Naive thymus-derived CD4-positive, alpha-beta T cell (primary cell): ENCODE measurements at regions of chr10 and their contacts with region 1.

Region 1: DNA sequence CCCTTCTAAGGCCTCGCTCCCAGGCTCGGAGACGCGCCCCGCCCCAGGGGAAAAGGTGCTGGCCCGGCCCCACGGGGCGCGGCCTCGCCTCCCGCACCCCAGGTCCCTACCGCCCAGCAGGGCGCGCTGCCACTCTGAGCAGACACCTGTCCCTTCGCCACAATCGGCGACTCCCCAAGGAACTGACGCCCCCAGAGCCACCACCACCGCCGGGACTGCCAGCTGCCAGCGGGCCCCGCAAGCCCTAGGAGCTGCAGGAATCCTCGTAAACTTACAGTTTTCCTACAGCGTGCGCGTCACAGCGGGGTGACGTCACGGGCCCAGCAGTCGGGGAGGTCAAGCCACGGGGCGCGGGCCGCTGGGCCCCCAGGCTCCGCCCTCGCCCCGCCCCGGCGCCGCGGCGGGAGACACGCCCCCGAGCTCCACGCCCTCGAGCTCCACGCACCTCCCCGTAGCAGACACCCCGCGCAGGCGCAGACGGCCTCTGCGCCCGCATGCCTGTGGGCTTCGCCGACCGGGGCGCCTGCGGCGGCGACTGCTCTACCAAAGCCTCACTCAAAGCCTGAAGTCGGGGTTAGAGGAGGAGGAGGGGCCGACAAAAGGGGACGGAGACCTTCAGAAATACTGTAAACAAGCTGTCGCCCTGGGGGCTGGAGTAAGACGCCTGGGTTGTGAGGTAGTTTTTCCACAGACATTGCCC is at the start of gene ZNF438:
- DNase-seq: peak; percentile 93 to 99 (median 96)
- ATAC-seq: peak; percentile 92
- H3K4me3 ChIP-seq: peak within 1 kb of the TSS; percentile 84
- H3K4me3 Mint-ChIP-seq: peak within 1 kb of the TSS; percentile 89 to 94 (median 92)
- H3K27ac ChIP-seq: peak within 1 kb of the TSS; percentile 96
- H3K27ac Mint-ChIP-seq: peak within 1 kb of the TSS; percentile 93 to 99 (median 99)
- H3K4me1 ChIP-seq: peaks cover 5% of the 10 kb centered on the region in 2 donors
- H3K4me1 Mint-ChIP-seq: peaks cover 7 to 34% (median 14%) of the 10 kb centered on the region in 7 donors
- H3K27me3 ChIP-seq: no peaks in the 10 kb centered on the region
- H3K27me3 Mint-ChIP-seq: no peaks in the 10 kb centered on the region
- total RNA-seq, gene ZNF438: 3.9 to 5.8 (median 4.0) TPM

Region 2: DNA sequence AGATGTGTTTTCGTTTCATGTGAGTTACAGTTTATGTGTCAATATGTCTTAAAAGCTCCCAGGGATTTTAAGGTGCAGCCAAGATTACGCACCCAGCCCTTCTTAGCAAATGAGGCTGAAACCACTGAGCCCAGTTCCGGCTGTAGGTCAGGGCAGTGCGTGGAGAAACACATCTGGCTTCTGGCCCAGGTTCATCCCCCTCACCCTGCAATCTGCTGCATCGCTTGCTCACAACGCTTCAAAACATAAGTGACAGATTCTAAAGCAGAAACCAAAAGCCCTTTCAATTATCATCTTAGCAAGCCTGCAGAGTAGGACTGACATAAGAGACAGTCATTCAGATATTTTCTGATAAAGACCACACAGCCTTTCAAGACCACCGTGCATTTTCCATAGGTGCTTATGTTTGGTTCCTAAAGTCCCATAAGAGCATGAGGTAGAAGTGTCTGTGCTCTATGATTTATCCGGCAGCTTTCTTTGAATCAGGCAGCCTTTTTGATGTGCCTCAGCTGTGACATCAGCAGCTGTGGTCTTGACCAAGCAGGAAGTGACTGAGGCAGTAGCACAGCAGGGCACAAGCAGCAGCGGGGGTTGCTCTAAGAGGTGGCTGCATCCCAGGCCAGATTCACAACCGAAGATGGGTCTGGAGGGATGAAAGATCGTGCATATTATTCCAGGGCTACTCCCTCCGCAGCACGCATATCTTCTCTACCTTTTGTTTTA is 330.1 kb before region 1 on chr10:
- CTCF ChIA-PET with region 1: no interaction called
- POLR2A ChIA-PET with region 1: no interaction called
- intact Hi-C with region 1: loop called (anchors 1 kb)
- DNase-seq: peak in 8 of 9 donors; percentile 68 to 81 (median 74)
- ATAC-seq: peak; percentile 80
- H3K4me3 ChIP-seq: peak overlapping the region; percentile 31
- H3K4me3 Mint-ChIP-seq: peak overlapping the region; percentile 68 to 98 (median 88)
- H3K27ac ChIP-seq: peak overlapping the region; percentile 86
- H3K27ac Mint-ChIP-seq: peak overlapping the region; percentile 88 to 98 (median 96)
- H3K4me1 ChIP-seq: peaks cover 63 to 74% of the 10 kb centered on the region in 2 donors
- H3K4me1 Mint-ChIP-seq: peaks cover 51 to 97% (median 88%) of the 10 kb centered on the region in 7 donors
- H3K27me3 ChIP-seq: no peaks in the 10 kb centered on the region
- H3K27me3 Mint-ChIP-seq: no peaks in the 10 kb centered on the region

Region 3: GRCh38 chr10:31083765-31084184 is 52.1 kb after region 1 on chr10:
- CTCF ChIA-PET with region 1: interaction called, 3 read pairs
- POLR2A ChIA-PET with region 1: no interaction called
- intact Hi-C with region 1: loop called (anchors 2 to 5 kb)
- DNase-seq: peak; percentile 14 to 67 (median 56)
- ATAC-seq: peak; percentile 66
- H3K4me3 ChIP-seq: no peak overlapping the region
- H3K4me3 Mint-ChIP-seq: no peak overlapping the region
- H3K27ac ChIP-seq: no peak overlapping the region
- H3K27ac Mint-ChIP-seq: no peak overlapping the region
- H3K4me1 ChIP-seq: no peaks in the 10 kb centered on the region
- H3K4me1 Mint-ChIP-seq: peaks cover 0 to 12% (median 3%) of the 10 kb centered on the region in 7 donors
- H3K27me3 ChIP-seq: no peaks in the 10 kb centered on the region
- H3K27me3 Mint-ChIP-seq: peaks cover 0 to 5% (median 0%) of the 10 kb centered on the region in 5 donors

Region 4: GRCh38 chr10:31490858-31491504 is 459.3 kb after region 1 on chr10:
- CTCF ChIA-PET with region 1: no interaction called
- POLR2A ChIA-PET with region 1: no interaction called
- intact Hi-C with region 1: loop called (anchors 1 kb)
- DNase-seq: peak in 6 of 9 donors; percentile 30 to 50 (median 36)
- ATAC-seq: peak; percentile 72
- H3K4me3 ChIP-seq: no peak overlapping the region
- H3K4me3 Mint-ChIP-seq: no peak overlapping the region
- H3K27ac ChIP-seq: no peak overlapping the region
- H3K27ac Mint-ChIP-seq: peak overlapping the region in 1 of 9 donors; percentile 1
- H3K4me1 ChIP-seq: no peaks in the 10 kb centered on the region
- H3K4me1 Mint-ChIP-seq: peaks cover 0 to 12% (median 0%) of the 10 kb centered on the region in 7 donors
- H3K27me3 ChIP-seq: no peaks in the 10 kb centered on the region
- H3K27me3 Mint-ChIP-seq: no peaks in the 10 kb centered on the region

Region 5: DNA sequence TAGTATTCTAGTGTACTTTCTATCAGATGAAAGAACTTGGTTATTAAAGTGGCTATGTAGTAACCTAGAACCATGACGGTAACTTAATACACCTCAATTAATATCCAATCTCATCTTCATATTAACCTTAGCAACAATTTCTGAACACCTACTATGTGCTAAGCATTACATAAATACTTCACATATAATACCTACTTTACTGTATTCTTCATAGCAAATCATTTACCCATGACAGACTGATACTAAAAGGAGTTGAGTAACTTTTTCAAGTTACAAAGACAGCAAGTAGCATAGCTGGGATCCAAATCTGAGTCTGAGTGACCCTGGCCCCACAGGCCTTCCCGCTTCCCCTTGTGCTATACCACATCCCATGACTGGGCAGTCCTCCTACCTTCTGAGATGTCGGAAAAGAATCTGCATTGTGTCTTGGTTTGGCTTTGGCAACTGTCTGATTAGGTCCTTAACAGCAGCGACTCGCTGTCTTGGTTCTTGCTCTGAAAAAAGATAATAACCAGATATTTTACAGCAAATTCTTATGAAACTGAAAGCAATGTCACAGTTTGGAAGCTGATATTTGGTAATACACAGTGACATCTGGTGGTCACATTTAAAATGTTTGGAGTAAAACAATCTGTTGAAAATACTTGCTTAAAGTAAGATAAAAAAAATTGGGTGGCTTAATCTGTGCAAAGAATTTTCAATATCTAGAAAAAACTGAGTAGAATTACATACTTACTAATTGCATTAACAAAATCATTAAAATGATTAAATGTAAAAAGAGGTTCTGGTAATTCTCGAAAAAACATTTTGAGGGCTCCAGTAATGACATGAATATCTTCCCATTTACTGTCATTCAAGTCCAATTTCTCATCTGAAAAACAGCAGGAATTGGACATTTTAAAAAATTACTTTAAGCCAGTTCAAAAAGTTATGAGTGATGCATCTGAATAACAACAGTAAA is 776.8 kb after region 1 on chr10:
- CTCF ChIA-PET with region 1: no interaction called
- POLR2A ChIA-PET with region 1: no interaction called
- intact Hi-C with region 1: loop called (anchors 1 to 2 kb)
- DNase-seq: peak in 8 of 9 donors; percentile 21 to 62 (median 48)
- ATAC-seq: peak; percentile 77
- H3K4me3 ChIP-seq: no peak overlapping the region
- H3K4me3 Mint-ChIP-seq: peak overlapping the region in 3 of 10 donors; percentile 51 to 78 (median 56)
- H3K27ac ChIP-seq: no peak overlapping the region
- H3K27ac Mint-ChIP-seq: peak overlapping the region in 8 of 9 donors; percentile 17 to 94 (median 71)
- H3K4me1 ChIP-seq: no peaks in the 10 kb centered on the region
- H3K4me1 Mint-ChIP-seq: peaks cover 2 to 11% (median 6%) of the 10 kb centered on the region in 7 donors
- H3K27me3 ChIP-seq: no peaks in the 10 kb centered on the region
- H3K27me3 Mint-ChIP-seq: no peaks in the 10 kb centered on the region